Right ventricle myocardium inferior (tissue), 1 donor: ENCODE measurements at regions of chr5 and their contacts with region 1.

Region 1: DNA sequence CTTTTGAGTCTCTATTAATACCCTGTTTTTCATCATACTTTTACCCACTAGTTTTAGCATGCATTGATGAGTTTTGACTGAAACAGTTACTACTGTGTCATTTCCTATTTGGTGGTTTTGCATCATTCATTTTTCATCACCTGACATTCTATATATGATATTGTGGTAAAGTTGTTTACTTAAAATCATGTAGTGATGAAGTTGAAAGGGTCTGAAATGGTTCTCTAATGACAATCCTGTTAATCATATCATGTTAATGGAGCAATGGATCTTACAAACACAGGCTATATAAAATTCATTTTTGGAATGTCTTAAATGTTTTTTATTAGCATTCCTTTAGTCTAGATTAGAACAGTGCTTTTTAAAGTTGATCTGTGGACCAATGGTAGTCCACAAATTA is 84.1 kb downstream of the ERBIN start:
- DNase-seq: no peak
- ATAC-seq: no peak

Region 2: DNA sequence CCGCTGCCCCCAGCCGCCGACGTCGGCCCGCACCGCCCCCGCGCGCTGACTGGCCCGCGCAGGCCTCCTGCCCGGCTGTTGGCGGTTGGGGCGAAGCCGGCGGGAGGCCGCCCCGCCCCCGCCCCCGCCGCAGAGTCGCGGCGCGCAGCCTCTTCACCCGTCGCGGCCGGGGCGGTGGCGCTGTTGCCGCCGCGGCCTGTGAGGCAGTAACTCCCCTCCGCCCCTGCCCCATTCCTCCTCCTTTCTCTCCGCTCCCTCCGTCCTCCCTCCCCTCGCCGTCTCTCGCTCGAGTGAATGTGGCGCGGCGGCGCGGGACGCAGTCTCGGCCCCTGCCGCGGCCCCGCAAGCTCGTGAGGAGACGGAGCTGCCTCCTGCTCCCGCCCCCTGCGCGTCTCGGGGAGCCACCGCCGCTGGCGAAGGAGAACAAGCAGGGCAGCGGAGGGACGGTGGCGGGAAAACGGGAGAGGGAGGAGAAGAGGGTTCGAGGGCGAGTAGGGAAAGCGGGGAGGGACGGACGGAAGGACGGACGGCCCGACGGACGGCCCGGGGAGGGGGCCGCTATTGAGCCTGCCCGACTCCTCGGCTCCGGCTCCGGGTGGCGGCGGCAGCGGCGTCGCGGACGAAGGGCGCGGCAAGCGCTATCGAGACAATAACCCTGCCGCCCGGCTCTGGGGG is 84.7 kb before region 1 on chr5:
- intact Hi-C with region 1: loop called (anchors 10 kb)
- DNase-seq: peak; percentile 93
- ATAC-seq: peak; percentile 93